K562 (cell line): ENCODE measurements at regions of chr6 and their contacts with region 1.

Region 1: GRCh38 chr6:17714879-17715851 is 8.4 kb upstream of the NUP153 start:
- DNase-seq: peak; percentile 73 to 92 (median 80)
- ATAC-seq: peak; percentile 87
- H3K4me3 ChIP-seq: no peak overlapping the region
- H3K27ac ChIP-seq: peak overlapping the region; percentile 88
- H3K4me1 ChIP-seq: peaks cover 6 to 33% of the 10 kb centered on the region in 2 experiments
- H3K27me3 ChIP-seq: no peaks in the 10 kb centered on the region
- CTCF ChIP-seq: 0 out of 6 replicates have a peak, but pooled peaks of 1 of the 3 experiments have one; percentile 1
- EP300 ChIP-seq: peak; percentile 68
- POLR2A ChIP-seq: peak; percentile 43; the same call in 1 of the 2 replicates
- RAD21 ChIP-seq: 0 out of 4 replicates have a peak, but pooled peaks of 1 of the 2 experiments have one; percentile 5

Region 2: DNA sequence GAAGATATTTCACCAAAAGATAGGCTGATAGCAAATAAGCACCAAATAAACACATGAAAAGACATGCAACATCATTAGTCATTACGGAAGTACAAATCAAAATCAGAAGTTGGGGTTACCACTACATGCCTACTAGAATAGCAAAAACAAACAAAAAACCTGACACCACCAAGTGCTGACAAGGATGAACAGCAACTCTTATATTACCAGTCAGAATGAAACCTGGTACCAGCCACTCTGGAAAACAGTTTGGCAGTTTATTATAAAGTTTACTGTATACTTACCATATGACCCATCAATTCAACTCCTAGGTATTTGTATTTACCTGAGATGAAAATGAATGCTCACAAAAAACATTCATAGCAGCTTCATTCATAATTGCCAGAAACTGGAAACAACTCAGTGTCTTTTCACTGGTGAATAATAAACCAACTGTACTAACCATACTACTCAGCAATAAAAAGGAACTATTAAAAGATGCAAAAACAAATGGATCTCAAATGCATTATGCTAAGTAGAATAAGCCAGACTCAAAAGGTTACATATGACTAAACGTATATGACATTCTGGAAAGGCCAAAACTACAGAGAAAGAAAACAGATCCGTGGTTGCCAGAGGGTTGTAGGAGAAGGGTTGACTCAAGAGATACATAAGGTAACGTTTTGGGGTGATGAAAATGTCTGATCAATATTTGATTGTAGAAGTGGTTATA is 41.5 kb before region 1 on chr6:
- CTCF ChIA-PET with region 1: no interaction called
- POLR2A ChIA-PET with region 1: no interaction called
- in situ Hi-C with region 1: no loop called
- intact Hi-C with region 1: no loop called
- DNase-seq: no peak
- ATAC-seq: no peak
- H3K4me3 ChIP-seq: no peak overlapping the region
- H3K27ac ChIP-seq: no peak overlapping the region
- H3K4me1 ChIP-seq: no peaks in the 10 kb centered on the region
- H3K27me3 ChIP-seq: no peaks in the 10 kb centered on the region
- CTCF ChIP-seq: no peak
- EP300 ChIP-seq: no peak
- POLR2A ChIP-seq: no peak
- RAD21 ChIP-seq: no peak

Region 3: DNA sequence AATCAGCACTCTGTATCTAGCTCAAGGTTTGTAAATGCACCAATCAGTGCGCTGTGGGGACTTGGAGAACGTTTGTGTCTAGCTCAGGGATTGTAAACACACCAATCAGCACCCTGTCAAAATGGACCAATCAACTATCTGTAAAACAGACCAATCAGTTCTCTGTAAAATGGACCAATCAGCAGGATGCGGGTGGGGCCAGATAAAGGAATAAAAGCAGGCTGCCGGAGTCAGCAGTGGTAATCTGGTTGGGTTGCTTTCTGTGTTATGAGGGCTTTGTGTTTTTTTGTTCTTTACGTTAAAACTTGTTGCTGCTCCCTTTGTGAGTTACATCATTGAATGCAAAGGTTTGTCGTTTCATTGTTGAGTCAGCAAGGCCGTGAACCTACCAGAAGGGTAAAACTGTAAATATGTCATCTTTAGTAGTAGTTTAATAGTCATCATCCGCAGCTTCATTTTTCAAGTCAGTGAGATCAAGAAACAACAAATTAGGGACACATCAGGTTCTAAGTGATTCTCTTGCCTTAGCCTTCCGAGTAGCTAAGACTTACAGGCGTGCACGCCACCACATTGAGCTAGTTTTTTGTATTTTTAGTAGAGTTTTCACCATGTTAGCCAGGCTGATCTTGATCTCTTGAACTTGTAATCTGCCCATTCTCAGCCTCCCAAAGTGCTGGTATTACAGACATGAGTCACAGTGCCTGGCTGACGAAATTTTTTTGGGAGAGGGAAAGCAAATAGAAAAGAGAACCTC is 14.3 kb after region 1 on chr6:
- CTCF ChIA-PET with region 1: no interaction called
- POLR2A ChIA-PET with region 1: interaction called, 13 read pairs
- in situ Hi-C with region 1: no loop called
- intact Hi-C with region 1: no loop called
- DNase-seq: peak in 1 of 4 experiments; percentile 44
- ATAC-seq: peak; percentile 66
- H3K4me3 ChIP-seq: no peak overlapping the region
- H3K27ac ChIP-seq: peak overlapping the region; percentile 69
- H3K4me1 ChIP-seq: peaks cover 4 to 16% of the 10 kb centered on the region in 2 experiments
- H3K27me3 ChIP-seq: no peaks in the 10 kb centered on the region
- CTCF ChIP-seq: no peak
- EP300 ChIP-seq: peak; percentile 60; the same call in 1 of the 2 replicates
- POLR2A ChIP-seq: no peak; the same call in 1 of the 2 replicates
- RAD21 ChIP-seq: no peak

Region 4: DNA sequence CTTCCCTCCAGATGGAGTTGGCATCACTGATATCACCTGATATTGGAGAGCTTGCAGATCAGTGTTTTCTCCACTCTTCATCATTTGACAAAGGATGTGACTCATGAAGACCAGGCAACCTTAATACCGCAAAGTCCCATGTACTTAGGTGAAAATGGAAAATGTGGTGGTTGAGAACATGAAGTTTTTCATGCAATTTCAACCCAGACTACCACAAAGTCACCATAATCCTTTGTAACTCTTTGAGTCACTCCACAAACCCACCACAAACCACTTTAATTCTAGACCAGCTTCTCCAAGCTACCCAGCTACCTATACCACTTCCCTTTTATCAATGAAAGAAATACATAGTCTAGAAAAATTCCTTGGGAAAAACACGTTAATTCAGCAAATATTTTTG is 400.2 kb after region 1 on chr6:
- CTCF ChIA-PET with region 1: no interaction called
- POLR2A ChIA-PET with region 1: no interaction called
- in situ Hi-C with region 1: no loop called
- intact Hi-C with region 1: no loop called
- DNase-seq: no peak
- ATAC-seq: no peak
- H3K4me3 ChIP-seq: no peak overlapping the region
- H3K27ac ChIP-seq: no peak overlapping the region
- H3K4me1 ChIP-seq: peaks cover 0 to 3% of the 10 kb centered on the region in 2 experiments; a peak in 1 of 5 replicates
- H3K27me3 ChIP-seq: no peaks in the 10 kb centered on the region; a peak in 1 of 5 replicates
- CTCF ChIP-seq: no peak
- EP300 ChIP-seq: no peak
- POLR2A ChIP-seq: no peak
- RAD21 ChIP-seq: no peak